ENCODE measurements at regions of chr6 and their contacts with region 1.

Region 1: DNA sequence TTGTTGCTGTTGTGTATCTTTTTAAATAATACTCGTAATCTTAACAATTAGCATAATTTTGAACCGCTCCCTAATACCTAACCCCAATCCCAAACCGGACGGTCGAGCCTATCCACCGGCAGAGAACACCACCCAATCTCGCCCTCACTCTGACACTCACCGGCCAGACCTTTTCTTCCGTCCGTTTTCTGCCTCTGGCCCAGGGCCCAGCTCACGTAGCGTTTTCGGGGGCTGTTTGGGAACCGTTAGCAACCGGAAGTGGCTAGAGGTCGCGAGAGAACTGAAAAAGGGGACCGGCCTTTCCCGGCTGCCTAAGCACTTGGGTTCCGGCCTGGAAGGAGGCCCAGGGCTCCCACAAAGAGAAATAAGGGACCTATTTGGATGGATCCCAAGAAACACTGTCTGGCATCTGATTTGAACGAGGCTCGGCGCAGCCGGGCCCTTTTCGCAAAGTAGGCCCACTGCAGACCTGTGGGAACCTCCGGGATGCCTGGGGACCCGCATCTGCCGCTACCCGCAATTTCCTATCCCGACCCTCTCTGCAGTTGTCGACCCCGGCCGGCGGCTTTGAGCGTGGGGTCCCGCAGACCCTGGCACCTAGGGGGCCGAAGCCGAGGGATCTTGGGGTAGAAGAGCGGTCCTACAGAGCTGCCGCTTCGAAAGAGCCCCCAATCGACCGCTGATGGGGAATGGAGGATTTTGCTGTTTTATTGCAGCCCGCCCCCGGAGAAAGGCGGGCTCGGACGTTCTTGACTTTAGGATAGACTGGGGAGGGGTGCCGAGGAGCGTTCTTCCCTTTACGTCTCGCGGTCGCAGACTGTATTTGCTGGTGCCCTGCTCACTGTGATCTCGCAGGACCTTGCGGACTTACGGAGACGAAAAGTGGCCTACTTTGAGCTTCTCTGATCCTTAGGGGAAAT is 4.8 kb upstream of the ZKSCAN8 start:
- DNase-seq: peak; percentile 42 to 83 (median 70)
- ATAC-seq: peak; percentile 48 to 51
- H3K4me3 Mint-ChIP-seq: peak overlapping the region; percentile 93 to 99 (median 96)
- H3K27ac Mint-ChIP-seq: peak overlapping the region; percentile 95 to 99 (median 99)
- H3K4me1 Mint-ChIP-seq: peaks cover 40 to 82% (median 71%) of the 10 kb centered on the region in 4 donors
- H3K27me3 Mint-ChIP-seq: no peaks in the 10 kb centered on the region

Region 2: GRCh38 chr6:27951040-27951439 is 185.8 kb before region 1 on chr6:
- POLR2A ChIA-PET with region 1: no interaction called
- DNase-seq: no peak
- ATAC-seq: no peak
- H3K4me3 Mint-ChIP-seq: no peak overlapping the region
- H3K27ac Mint-ChIP-seq: no peak overlapping the region
- H3K4me1 Mint-ChIP-seq: no peaks in the 10 kb centered on the region
- H3K27me3 Mint-ChIP-seq: peaks cover 34 to 82% (median 45%) of the 10 kb centered on the region in 5 donors

Region 3: DNA sequence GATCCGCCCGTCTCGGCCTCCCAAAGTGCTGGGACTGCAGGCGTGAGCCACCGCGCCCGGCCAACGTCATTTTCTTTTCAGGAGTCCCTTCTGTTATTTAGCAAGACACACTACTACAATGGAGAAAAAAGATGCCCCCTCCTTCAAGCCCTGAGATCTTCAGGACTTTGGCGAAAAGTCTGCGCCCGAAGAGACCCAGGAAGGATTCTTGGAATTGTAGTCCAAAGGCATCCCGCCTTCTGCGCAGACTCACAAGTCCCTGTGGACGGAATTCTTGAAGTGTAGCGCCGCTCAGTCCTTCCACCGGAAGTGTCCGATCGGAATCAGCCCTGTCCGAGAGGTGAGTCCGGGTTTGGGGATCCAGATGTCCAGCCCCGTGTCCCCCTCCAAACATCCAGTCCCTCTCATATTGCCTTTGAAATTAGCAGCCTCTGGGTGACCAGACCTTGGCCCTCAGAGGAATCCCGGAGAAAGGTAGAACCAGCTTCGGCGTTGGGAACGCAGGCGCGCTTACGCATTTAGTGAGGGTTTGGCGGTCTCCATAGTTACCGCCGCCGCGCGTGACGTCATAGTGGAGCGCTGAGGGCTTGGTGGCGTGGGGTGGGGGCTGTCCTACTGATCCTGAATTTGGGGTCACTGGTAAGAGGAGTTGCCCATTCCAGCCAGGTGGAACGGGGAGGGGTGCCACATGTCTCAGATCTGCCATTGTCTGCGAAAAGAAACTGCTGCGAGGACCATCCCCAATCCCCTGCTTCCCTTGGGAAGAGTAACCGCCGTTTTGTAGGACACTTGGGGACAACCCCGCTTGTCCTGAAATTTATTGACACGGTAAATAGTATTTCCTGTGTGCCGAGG is 56.0 kb before region 1 on chr6:
- POLR2A ChIA-PET with region 1: interaction called, 10 read pairs
- DNase-seq: peak; percentile 81 to 99 (median 94)
- ATAC-seq: peak; percentile 72 to 77
- H3K4me3 Mint-ChIP-seq: peak overlapping the region; percentile 70 to 98 (median 98)
- H3K27ac Mint-ChIP-seq: peak overlapping the region; percentile 87 to 100 (median 100)
- H3K4me1 Mint-ChIP-seq: peaks cover 11 to 32% (median 18%) of the 10 kb centered on the region in 4 donors
- H3K27me3 Mint-ChIP-seq: no peaks in the 10 kb centered on the region

Region 4: DNA sequence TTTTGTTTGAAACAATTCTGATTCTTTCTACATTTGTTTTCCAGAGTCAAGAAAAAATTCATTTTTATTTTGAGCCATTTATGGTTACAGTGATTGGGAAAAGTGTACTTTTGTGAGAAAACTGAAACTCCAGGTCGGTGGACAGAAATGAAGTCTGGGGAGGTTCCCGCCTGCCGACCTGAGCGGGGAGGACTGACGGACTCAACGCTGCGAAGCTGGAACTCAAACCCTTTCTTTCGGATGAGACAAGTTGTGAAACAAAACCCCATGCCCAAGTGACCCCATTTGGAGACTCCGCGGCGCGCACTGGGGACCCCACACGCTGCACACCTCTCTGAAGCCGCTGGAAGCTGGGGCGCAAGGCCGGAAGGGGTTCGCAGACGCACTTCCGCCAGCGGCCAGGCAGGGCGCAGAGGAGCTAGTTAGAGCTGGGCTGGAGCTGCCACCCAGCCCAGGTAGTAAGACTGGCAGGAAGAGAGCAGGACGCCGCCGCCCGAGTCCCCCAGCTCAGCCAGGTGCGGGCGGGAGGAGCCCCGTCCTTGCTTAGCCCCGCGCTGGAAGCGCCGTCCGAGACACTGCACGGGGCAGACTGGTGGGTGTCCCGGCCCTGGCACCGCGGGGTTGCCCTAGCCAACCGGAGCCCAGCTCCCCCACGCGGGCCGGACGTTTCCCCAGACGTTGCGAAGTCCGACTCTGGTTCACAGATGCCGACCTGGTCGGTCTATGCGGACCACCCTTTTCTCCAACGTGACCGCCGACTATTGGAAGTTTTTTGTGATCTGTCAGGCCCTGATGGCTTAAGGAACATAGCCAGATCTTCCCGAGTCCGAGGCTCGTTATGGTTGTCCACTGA is 32.2 kb before region 1 on chr6:
- POLR2A ChIA-PET with region 1: interaction called, 19 read pairs
- DNase-seq: peak; percentile 70 to 91 (median 82)
- ATAC-seq: peak; percentile 98 to 99
- H3K4me3 Mint-ChIP-seq: peak overlapping the region; percentile 89 to 95 (median 92)
- H3K27ac Mint-ChIP-seq: peak overlapping the region; percentile 89 to 98 (median 97)
- H3K4me1 Mint-ChIP-seq: peaks cover 5 to 13% (median 9%) of the 10 kb centered on the region in 4 donors
- H3K27me3 Mint-ChIP-seq: peaks cover 0 to 17% (median 5%) of the 10 kb centered on the region in 5 donors

Region 5: DNA sequence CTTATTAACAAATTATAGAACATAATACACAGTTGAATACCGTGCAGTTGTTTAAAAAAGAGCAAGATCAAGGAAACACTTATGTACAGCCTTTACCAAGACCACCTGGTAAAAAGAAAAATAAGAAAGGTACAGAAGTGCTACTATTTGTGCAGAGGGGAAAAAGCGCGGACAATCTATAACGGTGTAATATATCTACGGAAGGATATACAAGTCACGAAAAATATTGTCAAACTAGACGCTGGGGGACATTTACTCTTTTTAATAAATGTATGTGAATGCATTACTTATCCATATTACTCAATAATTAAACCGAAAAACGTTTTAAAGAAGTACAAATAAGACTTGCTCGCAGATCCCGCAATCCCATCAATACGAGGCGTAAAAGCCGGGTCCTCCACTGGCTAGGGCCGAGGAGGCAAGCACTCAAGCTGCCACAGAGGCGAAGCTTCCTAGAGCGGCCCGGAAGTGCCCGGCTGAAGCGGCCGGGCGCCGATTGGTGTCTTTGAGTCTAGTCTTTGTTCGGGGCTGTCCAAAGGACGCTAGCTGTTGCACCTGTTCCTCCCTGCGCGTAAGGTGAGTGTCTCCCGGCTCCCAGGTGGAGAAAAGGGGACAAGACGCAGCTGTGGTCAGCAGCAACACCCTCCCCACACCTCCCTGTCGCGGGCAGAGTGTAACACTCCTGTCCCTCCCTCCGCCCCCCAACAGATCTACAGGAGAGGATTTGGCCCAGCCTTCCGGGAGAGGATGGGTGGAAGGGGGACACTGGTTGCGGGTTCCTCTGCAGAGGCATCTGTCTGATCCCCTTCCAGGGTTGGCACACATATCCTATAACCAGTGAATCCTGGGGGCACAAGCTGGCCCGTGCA is 12.5 kb before region 1 on chr6 and contains the start of gene ZSCAN16:
- POLR2A ChIA-PET with region 1: interaction called, 32 read pairs
- DNase-seq: peak; percentile 52 to 83 (median 67)
- ATAC-seq: peak; percentile 73 to 94
- H3K4me3 Mint-ChIP-seq: peak within 1 kb of the TSS; percentile 84 to 99 (median 95)
- H3K27ac Mint-ChIP-seq: peak within 1 kb of the TSS; percentile 95 to 99 (median 97)
- H3K4me1 Mint-ChIP-seq: peaks cover 32 to 56% (median 51%) of the 10 kb centered on the region in 4 donors
- H3K27me3 Mint-ChIP-seq: no peaks in the 10 kb centered on the region
- polyA plus RNA-seq, gene ZSCAN16: 6.0 to 13.2 (median 11.5) TPM

Region 6: DNA sequence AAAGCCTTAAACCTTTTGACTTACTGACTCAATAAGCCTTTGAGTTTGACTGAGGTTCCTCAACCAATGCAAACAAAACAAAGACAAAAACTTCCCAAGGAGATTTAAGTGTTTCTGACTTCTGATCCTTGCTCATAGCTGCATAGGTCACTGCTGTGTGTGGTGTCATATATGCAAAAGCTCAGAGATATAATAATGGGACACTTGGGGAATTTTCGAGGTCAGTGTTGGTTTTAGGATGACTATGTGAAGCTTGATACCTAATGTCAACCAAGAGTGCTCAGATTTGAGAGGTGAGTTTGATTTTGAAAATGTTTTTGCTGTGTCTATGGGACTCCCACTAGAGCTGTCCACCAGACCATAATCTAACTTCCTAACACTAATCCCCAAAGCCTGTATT is 31.1 kb after region 1 on chr6:
- POLR2A ChIA-PET with region 1: no interaction called
- DNase-seq: no peak
- ATAC-seq: no peak
- H3K4me3 Mint-ChIP-seq: no peak overlapping the region
- H3K27ac Mint-ChIP-seq: no peak overlapping the region
- H3K4me1 Mint-ChIP-seq: no peaks in the 10 kb centered on the region
- H3K27me3 Mint-ChIP-seq: peaks cover 6 to 11% (median 7%) of the 10 kb centered on the region in 5 donors

Region 7: GRCh38 chr6:28252009-28252975 is 115.4 kb after region 1 on chr6 and contains the start of gene ZKSCAN4:
- POLR2A ChIA-PET with region 1: interaction called, 19 read pairs
- DNase-seq: peak; percentile 55 to 91 (median 82)
- ATAC-seq: peak; percentile 83 to 93
- H3K4me3 Mint-ChIP-seq: peak within 1 kb of the TSS; percentile 88 to 100 (median 98)
- H3K27ac Mint-ChIP-seq: peak within 1 kb of the TSS; percentile 91 to 98 (median 95)
- H3K4me1 Mint-ChIP-seq: peaks cover 18 to 48% (median 46%) of the 10 kb centered on the region in 4 donors
- H3K27me3 Mint-ChIP-seq: peaks cover 0 to 2% (median 0%) of the 10 kb centered on the region in 5 donors
- polyA plus RNA-seq, gene ZKSCAN4: 3.4 to 7.1 (median 4.1) TPM

Measured in naive thymus-derived CD8-positive, alpha-beta T cell (primary cell).